ENCODE measurements at regions of chr11 and their contacts with region 1.

Region 1: DNA sequence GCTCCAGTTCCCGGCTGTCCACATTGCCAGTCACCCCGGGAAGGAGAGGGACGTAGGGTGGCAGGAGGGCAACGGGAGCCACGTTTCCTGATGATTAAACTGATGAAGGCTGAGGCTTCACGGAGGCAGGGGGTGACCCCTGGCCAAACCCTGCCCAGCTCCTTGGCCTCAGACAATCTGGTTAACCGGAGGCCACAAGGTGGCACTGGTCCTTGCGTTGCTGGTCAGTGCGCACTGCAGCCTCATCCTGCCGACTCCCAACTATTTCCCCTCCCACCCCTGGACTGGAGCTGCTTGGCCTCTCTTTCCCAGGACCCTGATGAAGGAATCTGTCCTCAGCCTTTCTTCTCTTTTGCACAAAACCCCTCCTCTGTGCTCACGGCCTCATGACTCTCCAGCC is 75.3 kb downstream of the PDE2A start:
- DNase-seq: peak; percentile 55 to 65
- ATAC-seq: peak; percentile 73 to 89 (median 86)
- H3K4me3 ChIP-seq: no peak overlapping the region
- H3K27ac ChIP-seq: no peak overlapping the region
- H3K4me1 ChIP-seq: peaks cover 0 to 8% (median 0%) of the 10 kb centered on the region in 9 donors
- H3K27me3 ChIP-seq: peaks cover 0 to 1% (median 0%) of the 10 kb centered on the region in 7 donors
- CTCF ChIP-seq: peak; percentile 31 to 79 (median 68)

Region 2: GRCh38 chr11:72642884-72643511 is 44.1 kb after region 1 on chr11:
- intact Hi-C with region 1: loop called in 8 of 10 experiments (anchors 1 to 5 kb)
- DNase-seq: peak; percentile 38 to 73
- ATAC-seq: peak; percentile 70 to 82 (median 79)
- H3K4me3 ChIP-seq: peak overlapping the region; percentile 58 to 75 (median 72)
- H3K27ac ChIP-seq: peak overlapping the region in 9 of 10 donors; percentile 2 to 84 (median 59)
- H3K4me1 ChIP-seq: peaks cover 6 to 48% (median 25%) of the 10 kb centered on the region in 9 donors
- H3K27me3 ChIP-seq: peaks cover 0 to 44% (median 0%) of the 10 kb centered on the region in 7 donors
- CTCF ChIP-seq: peak; percentile 95 to 100 (median 99)

Region 3: DNA sequence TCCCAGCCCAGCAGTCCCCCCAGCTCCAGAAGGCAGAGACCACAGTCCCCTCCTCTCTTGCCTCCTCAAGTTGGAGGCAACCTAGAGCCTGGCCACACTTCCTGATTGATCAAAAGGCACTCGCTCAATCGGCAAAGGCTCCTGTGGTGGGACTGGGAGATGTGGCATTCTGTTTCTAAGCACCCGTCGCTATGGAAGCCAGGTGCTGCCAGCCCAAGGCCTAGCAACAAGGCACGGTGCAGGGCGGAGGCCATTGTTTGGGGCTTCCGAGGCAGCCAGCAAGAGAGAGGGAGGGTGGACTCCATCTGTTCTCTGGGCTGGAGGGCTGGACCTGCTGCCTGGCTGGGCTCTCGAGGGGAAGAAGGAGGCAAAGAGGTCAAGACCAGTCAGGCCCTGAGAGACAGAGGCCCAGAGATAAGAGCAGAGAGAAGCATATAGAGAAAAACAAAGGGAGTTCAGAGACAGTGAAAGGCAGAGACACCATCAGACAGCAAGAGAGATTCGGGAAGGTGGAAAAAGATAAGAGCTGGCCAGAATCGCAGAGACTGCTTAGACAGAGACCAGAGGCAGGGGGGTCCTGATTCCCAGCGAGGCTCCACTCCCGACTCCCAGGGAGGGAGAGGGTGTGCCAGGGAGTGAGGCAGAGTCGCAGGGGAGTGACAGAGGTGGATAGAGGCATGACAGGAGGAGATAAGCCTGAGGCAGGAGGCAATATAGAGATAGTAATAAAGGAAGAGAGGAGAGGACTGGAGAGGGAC is 54.1 kb after region 1 on chr11:
- intact Hi-C with region 1: loop called in 1 of 10 experiments (anchors 5 kb)
- DNase-seq: no peak
- ATAC-seq: no peak
- H3K4me3 ChIP-seq: no peak overlapping the region
- H3K27ac ChIP-seq: no peak overlapping the region
- H3K4me1 ChIP-seq: no peaks in the 10 kb centered on the region
- H3K27me3 ChIP-seq: no peaks in the 10 kb centered on the region
- CTCF ChIP-seq: no peak

Region 4: GRCh38 chr11:72668611-72669347 is 69.9 kb after region 1 on chr11:
- intact Hi-C with region 1: no loop called
- DNase-seq: no peak
- ATAC-seq: peak in 2 of 8 donors; percentile 29 to 46
- H3K4me3 ChIP-seq: no peak overlapping the region
- H3K27ac ChIP-seq: no peak overlapping the region
- H3K4me1 ChIP-seq: peaks cover 0 to 16% (median 9%) of the 10 kb centered on the region in 9 donors
- H3K27me3 ChIP-seq: peaks cover 0 to 61% (median 25%) of the 10 kb centered on the region in 7 donors
- CTCF ChIP-seq: no peak